Activated CD4-positive, alpha-beta T cell treated with anti-CD3 and anti-CD28 coated beads, Interleukin-2, amount 10 ng/mL, durations not matched to agents 24 days and 14 days (primary cell): ENCODE measurements at regions of chr9 and their contacts with region 1.

Region 1: GRCh38 chr9:104991144-104991953 is 63.4 kb upstream of the ABCA1 start:
- DNase-seq: peak; percentile 93
- H3K4me3 Mint-ChIP-seq: peak overlapping the region; percentile 88
- H3K27ac Mint-ChIP-seq: peak overlapping the region; percentile 82
- H3K4me1 Mint-ChIP-seq: peaks cover 29% of the 10 kb centered on the region
- H3K27me3 Mint-ChIP-seq: peaks cover 46% of the 10 kb centered on the region

Region 2: DNA sequence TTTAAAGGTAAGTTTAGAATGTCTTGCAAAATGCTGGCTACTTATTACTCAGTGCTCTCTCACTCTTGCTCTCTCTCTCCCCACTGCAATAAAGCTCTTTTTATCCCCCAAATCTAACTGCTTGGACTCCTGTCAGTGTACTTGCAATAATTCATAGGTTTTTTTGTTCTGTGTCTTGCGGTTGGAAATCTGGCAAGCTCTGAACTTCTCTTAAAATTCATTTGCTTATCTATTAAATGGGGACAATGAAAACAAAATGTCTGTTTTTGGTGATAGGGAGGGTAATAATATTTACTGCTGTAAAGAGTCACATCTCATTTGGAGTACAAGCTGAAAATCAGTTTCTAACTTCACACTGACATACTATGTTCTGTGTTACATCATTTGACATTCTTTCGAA is 315.7 kb before region 1 on chr9:
- intact Hi-C with region 1: no loop called
- DNase-seq: no peak
- H3K4me3 Mint-ChIP-seq: no peak overlapping the region
- H3K27ac Mint-ChIP-seq: no peak overlapping the region
- H3K4me1 Mint-ChIP-seq: no peaks in the 10 kb centered on the region
- H3K27me3 Mint-ChIP-seq: peaks cover 5% of the 10 kb centered on the region

Region 3: DNA sequence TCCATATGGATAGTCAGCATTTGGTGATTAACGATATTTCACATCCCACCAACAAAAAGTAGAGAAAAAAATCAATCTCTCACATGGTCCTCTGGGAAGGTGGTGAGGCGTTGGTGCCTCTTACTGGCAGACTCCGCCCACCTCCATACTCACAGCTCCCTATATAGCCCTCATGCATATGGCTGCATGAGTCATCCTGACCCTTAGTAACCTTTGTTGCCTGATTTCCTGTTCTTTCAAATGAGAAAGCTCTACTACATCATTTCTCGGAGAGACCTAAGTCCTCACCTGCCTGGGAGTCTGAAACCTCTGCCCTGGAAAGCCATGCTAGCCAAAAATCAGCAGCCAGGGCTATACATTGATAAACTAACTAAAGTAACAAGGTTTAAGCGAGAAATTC is 30.1 kb before region 1 on chr9:
- intact Hi-C with region 1: loop called (anchors 1 kb)
- DNase-seq: peak; percentile 87
- H3K4me3 Mint-ChIP-seq: peak overlapping the region; percentile 48
- H3K27ac Mint-ChIP-seq: peak overlapping the region; percentile 75
- H3K4me1 Mint-ChIP-seq: peaks cover 28% of the 10 kb centered on the region
- H3K27me3 Mint-ChIP-seq: no peaks in the 10 kb centered on the region

Region 4: DNA sequence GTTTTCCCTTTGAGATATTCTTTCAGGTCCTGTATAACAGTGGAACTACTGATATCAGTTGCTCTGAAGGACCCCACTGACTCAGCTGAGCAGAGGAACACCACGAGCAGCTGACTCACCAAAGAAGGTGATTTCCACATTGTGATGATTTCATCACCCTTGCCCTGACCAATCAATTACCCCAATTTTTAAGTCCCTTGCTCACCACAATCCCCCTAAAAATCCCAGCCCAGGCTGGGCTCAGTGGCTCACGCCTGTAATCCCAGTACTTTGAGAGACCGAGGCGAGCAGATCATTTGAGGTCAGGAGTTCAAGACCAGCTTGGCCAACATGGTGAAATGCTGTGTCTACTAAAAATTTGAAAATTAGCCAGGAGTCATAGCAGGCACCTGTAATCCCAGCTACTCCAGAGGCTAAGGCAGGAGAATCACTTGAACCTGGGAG is 61.9 kb after region 1 on chr9:
- intact Hi-C with region 1: loop called (anchors 5 kb)
- DNase-seq: peak; percentile 62
- H3K4me3 Mint-ChIP-seq: no peak overlapping the region
- H3K27ac Mint-ChIP-seq: peak overlapping the region; percentile 23
- H3K4me1 Mint-ChIP-seq: peaks cover 16% of the 10 kb centered on the region
- H3K27me3 Mint-ChIP-seq: no peaks in the 10 kb centered on the region

Region 5: DNA sequence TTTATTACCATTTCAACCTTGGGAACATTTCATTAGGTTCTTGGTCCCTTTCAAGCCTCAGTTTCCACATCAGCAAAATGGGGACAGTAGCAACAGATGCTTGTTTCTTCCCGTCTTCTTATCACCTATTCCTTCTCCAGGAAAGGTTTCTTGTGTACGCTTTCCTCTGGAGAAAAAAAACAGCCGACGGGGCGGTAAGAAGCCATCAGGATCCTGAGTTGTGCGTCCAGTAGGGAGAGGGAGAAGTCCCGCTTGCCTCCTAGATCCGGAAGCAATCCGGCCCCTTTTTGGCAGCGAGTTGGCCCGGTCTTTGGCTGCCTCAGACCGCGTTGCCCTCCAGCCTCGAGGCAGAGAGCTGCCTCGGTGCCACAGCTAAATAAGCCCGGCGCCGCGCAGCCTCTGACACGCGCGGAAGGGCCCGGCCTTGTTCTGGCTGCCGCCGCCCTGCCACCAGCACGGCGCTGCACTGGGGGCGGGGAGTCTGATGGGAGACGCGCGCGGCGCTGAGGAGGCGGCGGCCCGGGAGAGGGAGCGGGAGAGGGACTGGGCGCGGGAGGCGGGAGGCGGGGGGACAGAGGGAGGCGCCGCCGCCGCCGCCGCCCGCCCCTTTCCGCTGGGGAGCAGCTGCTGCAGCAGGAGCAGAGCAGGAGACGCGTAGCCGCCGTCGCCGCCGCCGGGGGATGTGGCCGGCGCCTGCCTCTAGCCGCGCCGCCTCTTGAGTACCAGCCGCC is 252.8 kb after region 1 on chr9 and contains the start of gene SLC44A1:
- intact Hi-C with region 1: loop called (anchors 10 kb)
- DNase-seq: peak; percentile 98
- H3K4me3 Mint-ChIP-seq: peak within 1 kb of the TSS; percentile 88
- H3K27ac Mint-ChIP-seq: peak within 1 kb of the TSS; percentile 74
- H3K4me1 Mint-ChIP-seq: peaks cover 22% of the 10 kb centered on the region
- H3K27me3 Mint-ChIP-seq: peaks cover 73% of the 10 kb centered on the region
- total RNA-seq, gene SLC44A1: 2.5 and 2.9 TPM in 2 replicates

Region 6: GRCh38 chr9:105405514-105406131 is 414.3 kb after region 1 on chr9:
- intact Hi-C with region 1: loop called (anchors 2 kb)
- DNase-seq: peak; percentile 90
- H3K4me3 Mint-ChIP-seq: peak overlapping the region; percentile 65
- H3K27ac Mint-ChIP-seq: peak overlapping the region; percentile 80
- H3K4me1 Mint-ChIP-seq: peaks cover 28% of the 10 kb centered on the region
- H3K27me3 Mint-ChIP-seq: peaks cover 73% of the 10 kb centered on the region